ENCODE measurements at regions of chr21 and their contacts with region 1.

Region 1: GRCh38 chr21:26842976-26843932 is 2.0 kb downstream of the ADAMTS1 start:
- DNase-seq: peak; percentile 88 to 96 (median 91)
- H3K4me3 ChIP-seq: peak overlapping the region in 2 of 4 donors; percentile 19 to 54
- H3K27ac ChIP-seq: peak overlapping the region in 4 of 5 donors; percentile 35 to 94 (median 80)
- H3K4me1 ChIP-seq: peaks cover 4 to 22% of the 10 kb centered on the region in 2 donors
- H3K27me3 ChIP-seq: peaks cover 15% of the 10 kb centered on the region
- CTCF ChIP-seq: peak in 1 of 6 experiments; percentile 32
- POLR2A ChIP-seq: peak in 1 of 2 donors; percentile 3

Region 2: DNA sequence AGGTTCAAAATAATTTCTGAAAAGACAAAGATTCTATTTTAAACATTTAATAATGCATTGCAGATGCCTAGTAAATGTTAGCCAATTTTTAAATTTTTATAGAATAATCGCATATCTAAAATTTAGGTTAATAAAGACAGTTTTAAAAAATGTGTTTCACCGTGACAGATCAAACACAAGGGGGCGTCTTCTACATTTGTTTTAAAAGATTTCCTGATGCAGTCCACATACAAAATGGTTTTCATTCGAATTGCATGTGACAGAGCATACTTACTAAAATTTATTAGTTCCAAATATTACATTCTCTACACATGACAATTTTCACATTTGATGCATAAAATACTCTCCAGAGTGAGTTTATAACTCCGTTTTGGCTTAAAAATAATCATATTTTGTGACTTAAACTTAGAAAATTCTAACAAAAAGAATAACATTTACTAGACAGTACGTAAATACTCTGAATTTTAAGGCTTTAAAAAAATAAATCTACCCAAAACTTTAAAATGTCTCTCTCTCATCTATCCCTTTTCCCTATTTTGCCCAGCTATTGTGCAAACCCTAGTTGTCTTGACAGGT is 73.6 kb before region 1 on chr21:
- intact Hi-C with region 1: loop called in 1 of 2 experiments (anchors 10 kb)
- DNase-seq: peak in 1 of 7 donors; percentile 7
- H3K4me3 ChIP-seq: no peak overlapping the region
- H3K27ac ChIP-seq: no peak overlapping the region
- H3K4me1 ChIP-seq: no peaks in the 10 kb centered on the region
- H3K27me3 ChIP-seq: no peaks in the 10 kb centered on the region
- CTCF ChIP-seq: peak; percentile 17 to 69 (median 42)
- POLR2A ChIP-seq: no peak

Region 3: GRCh38 chr21:27077501-27077900 is 234.2 kb after region 1 on chr21:
- intact Hi-C with region 1: no loop called
- DNase-seq: no peak
- H3K4me3 ChIP-seq: no peak overlapping the region
- H3K27ac ChIP-seq: no peak overlapping the region
- H3K4me1 ChIP-seq: no peaks in the 10 kb centered on the region
- H3K27me3 ChIP-seq: no peaks in the 10 kb centered on the region
- CTCF ChIP-seq: no peak
- POLR2A ChIP-seq: no peak